ENCODE measurements at regions of chr19 and their contacts with region 1.

Region 1: DNA sequence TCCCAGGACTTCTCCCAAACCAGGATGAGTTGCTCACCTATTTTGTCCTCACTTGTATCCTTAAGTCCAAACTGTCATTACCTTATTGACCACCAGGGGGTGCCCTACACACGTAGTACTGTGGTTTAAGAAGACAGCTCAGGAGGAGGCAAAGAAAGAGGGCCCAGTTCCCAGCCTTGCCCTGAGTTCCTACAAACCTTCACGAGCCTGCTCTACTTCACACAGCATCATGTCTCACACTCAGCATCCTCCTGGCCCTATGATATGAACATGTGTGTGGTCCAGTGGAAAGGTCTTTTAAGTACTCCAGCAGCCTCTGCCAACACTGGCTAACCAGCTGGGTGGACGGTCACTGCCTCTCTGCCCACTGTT is 8.1 kb upstream of the ZNF784 start:
- DNase-seq: peak; percentile 85 to 95 (median 88)
- H3K4me3 ChIP-seq: no peak overlapping the region
- H3K4me3 Mint-ChIP-seq: peak overlapping the region; percentile 4 to 68 (median 52)
- H3K27ac ChIP-seq: no peak overlapping the region
- H3K27ac Mint-ChIP-seq: peak overlapping the region; percentile 69 to 98 (median 91)
- H3K4me1 ChIP-seq: peaks cover 41% of the 10 kb centered on the region
- H3K4me1 Mint-ChIP-seq: peaks cover 30 to 55% (median 43%) of the 10 kb centered on the region in 4 donors
- H3K27me3 ChIP-seq: no peaks in the 10 kb centered on the region
- H3K27me3 Mint-ChIP-seq: no peaks in the 10 kb centered on the region

Region 2: DNA sequence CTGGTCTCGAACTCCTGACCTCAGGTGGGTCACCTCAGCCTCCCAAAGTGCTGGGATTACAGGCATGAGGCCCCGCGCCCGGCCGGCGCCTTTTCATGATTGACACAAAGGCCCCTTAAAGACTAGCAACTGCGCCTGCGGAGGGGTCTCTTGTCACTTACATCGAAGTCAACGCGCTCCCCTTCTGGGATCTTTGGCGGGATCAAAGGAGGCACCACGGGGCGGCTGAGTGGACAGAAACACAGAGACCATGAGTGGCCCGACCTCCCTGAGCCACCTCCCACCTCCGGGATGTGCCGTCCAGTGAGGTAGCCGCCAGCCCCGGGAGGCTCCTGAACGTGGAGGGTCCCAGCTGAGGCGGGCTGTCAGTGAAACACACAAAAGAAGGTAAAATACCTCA is 490.8 kb before region 1 on chr19:
- CTCF ChIA-PET with region 1: interaction called, 7 read pairs
- POLR2A ChIA-PET with region 1: no interaction called
- intact Hi-C with region 1: loop called (anchors 2 kb)
- DNase-seq: no peak
- H3K4me3 ChIP-seq: no peak overlapping the region
- H3K4me3 Mint-ChIP-seq: no peak overlapping the region
- H3K27ac ChIP-seq: no peak overlapping the region
- H3K27ac Mint-ChIP-seq: no peak overlapping the region
- H3K4me1 ChIP-seq: peaks cover 3% of the 10 kb centered on the region
- H3K4me1 Mint-ChIP-seq: peaks cover 3 to 6% (median 4%) of the 10 kb centered on the region in 4 donors
- H3K27me3 ChIP-seq: peaks cover 18% of the 10 kb centered on the region
- H3K27me3 Mint-ChIP-seq: peaks cover 34% of the 10 kb centered on the region in 2 donors

Region 3: DNA sequence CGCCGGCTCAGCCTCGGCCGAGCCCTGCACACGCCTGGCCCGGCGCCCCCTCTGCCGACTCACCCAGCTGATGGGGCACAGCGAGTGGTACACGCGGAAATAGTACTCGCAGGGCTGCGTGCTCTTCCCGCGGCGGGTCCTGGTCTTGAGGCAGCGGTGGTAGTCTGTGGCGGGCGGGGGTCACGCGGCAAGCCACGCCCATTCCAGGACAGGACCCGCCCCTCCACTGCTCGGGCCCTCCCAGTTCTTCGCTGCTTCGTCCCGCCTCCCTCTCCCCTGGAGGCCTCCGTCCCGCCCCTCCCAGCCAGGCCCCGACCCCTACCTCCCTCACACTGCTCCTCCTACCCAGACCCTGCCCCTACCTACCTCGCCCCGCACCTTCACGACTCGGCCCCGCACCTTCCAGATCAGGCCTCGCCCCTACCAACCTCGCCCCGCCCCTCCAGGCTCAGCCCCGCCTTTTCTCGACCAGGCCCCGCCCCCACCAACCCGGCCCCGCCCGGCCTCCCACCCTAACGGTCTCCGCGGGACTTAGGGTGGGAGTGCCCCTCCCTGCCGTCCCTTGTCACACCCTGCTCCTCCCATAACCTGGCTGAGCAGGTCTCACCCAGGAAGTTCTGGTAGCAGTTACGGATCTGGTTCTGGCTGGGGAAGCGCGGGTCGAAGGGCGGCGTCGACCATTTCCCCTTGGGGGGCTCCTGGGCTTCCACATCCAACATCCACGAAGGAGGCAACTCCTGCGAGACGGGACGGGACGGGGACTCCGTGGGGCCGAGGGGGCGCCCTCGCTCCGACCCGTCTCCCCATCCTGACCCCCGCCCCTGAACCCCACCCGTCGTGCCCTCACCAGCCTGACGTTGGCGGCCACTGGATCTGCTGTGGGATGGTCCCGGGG is 278.4 kb before region 1 on chr19:
- CTCF ChIA-PET with region 1: no interaction called
- POLR2A ChIA-PET with region 1: no interaction called
- intact Hi-C with region 1: no loop called
- DNase-seq: peak; percentile 54 to 74 (median 70)
- H3K4me3 ChIP-seq: peak overlapping the region in 1 of 2 donors; percentile 52
- H3K4me3 Mint-ChIP-seq: peak overlapping the region; percentile 69 to 84 (median 80)
- H3K27ac ChIP-seq: no peak overlapping the region
- H3K27ac Mint-ChIP-seq: peak overlapping the region in 5 of 7 donors; percentile 48 to 84 (median 57)
- H3K4me1 ChIP-seq: peaks cover 18% of the 10 kb centered on the region
- H3K4me1 Mint-ChIP-seq: peaks cover 4 to 33% (median 8%) of the 10 kb centered on the region in 4 donors
- H3K27me3 ChIP-seq: peaks cover 29% of the 10 kb centered on the region
- H3K27me3 Mint-ChIP-seq: peaks cover 30 to 47% of the 10 kb centered on the region in 2 donors

Region 4: DNA sequence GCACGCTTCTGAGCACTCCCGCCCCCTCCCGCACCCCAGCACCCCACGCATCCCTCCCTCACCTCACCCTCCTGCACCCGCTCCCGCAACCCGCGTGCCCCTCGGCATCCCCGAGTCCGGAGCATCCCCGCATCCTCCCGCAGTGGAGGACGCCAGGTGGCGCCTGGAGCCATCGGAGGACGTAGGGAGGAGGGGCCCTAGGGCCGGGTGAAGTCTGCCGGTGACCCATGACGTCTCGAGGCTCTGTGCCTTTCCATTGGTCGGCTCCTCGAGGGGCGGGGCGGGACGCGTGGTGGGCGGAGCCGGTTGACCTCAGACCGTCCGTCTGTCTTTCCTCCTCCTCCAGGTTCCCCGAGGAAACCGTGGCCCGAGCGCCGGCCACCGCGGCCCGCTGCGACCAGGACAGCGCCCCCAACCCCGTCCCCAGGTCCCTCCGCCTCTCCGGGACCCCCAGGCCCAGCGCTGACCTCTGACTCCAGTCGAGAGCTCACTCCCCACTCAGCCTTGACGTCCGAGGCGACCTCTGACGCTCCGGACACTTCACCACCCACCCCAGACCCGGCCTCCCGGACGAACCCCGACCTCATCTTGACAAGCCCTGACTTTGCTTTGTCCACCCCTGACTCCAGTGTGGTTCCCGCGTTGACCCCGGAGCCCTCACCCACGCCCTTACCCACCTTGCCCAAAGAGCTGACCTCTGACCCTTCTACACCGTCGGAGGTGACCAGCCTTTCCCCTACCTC is 115.4 kb before region 1 on chr19:
- CTCF ChIA-PET with region 1: interaction called, 165 read pairs
- POLR2A ChIA-PET with region 1: interaction called, 5 read pairs
- intact Hi-C with region 1: loop called (anchors 1 kb)
- DNase-seq: peak; percentile 85 to 86 (median 86)
- H3K4me3 ChIP-seq: peak overlapping the region in 1 of 2 donors; percentile 38
- H3K4me3 Mint-ChIP-seq: peak overlapping the region; percentile 71 to 86 (median 82)
- H3K27ac ChIP-seq: peak overlapping the region; percentile 42
- H3K27ac Mint-ChIP-seq: peak overlapping the region; percentile 77 to 97 (median 92)
- H3K4me1 ChIP-seq: peaks cover 6% of the 10 kb centered on the region
- H3K4me1 Mint-ChIP-seq: peaks cover 3 to 4% (median 3%) of the 10 kb centered on the region in 4 donors
- H3K27me3 ChIP-seq: no peaks in the 10 kb centered on the region
- H3K27me3 Mint-ChIP-seq: peaks cover 1 to 11% of the 10 kb centered on the region in 2 donors

Region 5: DNA sequence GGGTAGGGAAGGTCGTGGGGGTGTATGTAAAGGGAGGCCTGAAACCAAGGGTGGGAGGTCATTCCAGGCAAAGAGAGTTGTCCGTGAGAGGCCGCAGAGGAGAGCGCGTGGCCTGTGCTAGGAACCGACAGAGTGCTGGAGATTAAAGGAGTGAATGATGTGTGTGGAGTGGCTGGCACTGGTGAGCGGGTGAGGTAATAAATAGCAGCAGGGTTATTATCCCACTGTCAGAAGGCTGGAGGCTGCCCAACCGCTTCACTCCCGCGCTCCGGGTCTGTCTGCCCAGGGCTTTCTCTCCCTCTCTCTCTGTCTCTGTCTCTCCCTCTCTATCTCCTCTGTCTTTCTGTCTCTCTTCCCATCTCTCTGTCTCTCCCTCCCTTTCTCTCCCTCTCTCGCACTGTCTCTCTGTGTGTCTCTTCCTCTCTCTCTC is 69.2 kb before region 1 on chr19:
- CTCF ChIA-PET with region 1: no interaction called
- POLR2A ChIA-PET with region 1: no interaction called
- intact Hi-C with region 1: no loop called
- DNase-seq: no peak
- H3K4me3 ChIP-seq: no peak overlapping the region
- H3K4me3 Mint-ChIP-seq: peak overlapping the region in 1 of 8 donors; percentile 27
- H3K27ac ChIP-seq: no peak overlapping the region
- H3K27ac Mint-ChIP-seq: no peak overlapping the region
- H3K4me1 ChIP-seq: no peaks in the 10 kb centered on the region
- H3K4me1 Mint-ChIP-seq: peaks cover 0 to 1% (median 0%) of the 10 kb centered on the region in 4 donors
- H3K27me3 ChIP-seq: no peaks in the 10 kb centered on the region
- H3K27me3 Mint-ChIP-seq: peaks cover 11 to 12% of the 10 kb centered on the region in 2 donors

Region 6: GRCh38 chr19:55586976-55587668 is 45.3 kb before region 1 on chr19:
- CTCF ChIA-PET with region 1: interaction called, 23 read pairs
- POLR2A ChIA-PET with region 1: interaction called, 4 read pairs
- intact Hi-C with region 1: no loop called
- DNase-seq: peak; percentile 88 to 96 (median 91)
- H3K4me3 ChIP-seq: peak overlapping the region in 1 of 2 donors; percentile 60
- H3K4me3 Mint-ChIP-seq: peak overlapping the region; percentile 84 to 94 (median 87)
- H3K27ac ChIP-seq: no peak overlapping the region
- H3K27ac Mint-ChIP-seq: peak overlapping the region; percentile 85 to 93 (median 88)
- H3K4me1 ChIP-seq: peaks cover 29% of the 10 kb centered on the region
- H3K4me1 Mint-ChIP-seq: peaks cover 12 to 46% (median 28%) of the 10 kb centered on the region in 4 donors
- H3K27me3 ChIP-seq: no peaks in the 10 kb centered on the region
- H3K27me3 Mint-ChIP-seq: no peaks in the 10 kb centered on the region

Region 7: GRCh38 chr19:55605207-55605636 is 27.2 kb before region 1 on chr19:
- CTCF ChIA-PET with region 1: interaction called, 94 read pairs
- POLR2A ChIA-PET with region 1: interaction called, 67 read pairs
- intact Hi-C with region 1: no loop called
- DNase-seq: peak; percentile 95 to 98 (median 97)
- H3K4me3 ChIP-seq: peak overlapping the region; percentile 43 to 83
- H3K4me3 Mint-ChIP-seq: peak overlapping the region; percentile 79 to 93 (median 84)
- H3K27ac ChIP-seq: peak overlapping the region; percentile 88
- H3K27ac Mint-ChIP-seq: peak overlapping the region; percentile 83 to 97 (median 94)
- H3K4me1 ChIP-seq: peaks cover 42% of the 10 kb centered on the region
- H3K4me1 Mint-ChIP-seq: peaks cover 41 to 73% (median 48%) of the 10 kb centered on the region in 4 donors
- H3K27me3 ChIP-seq: no peaks in the 10 kb centered on the region
- H3K27me3 Mint-ChIP-seq: no peaks in the 10 kb centered on the region

Region 8: DNA sequence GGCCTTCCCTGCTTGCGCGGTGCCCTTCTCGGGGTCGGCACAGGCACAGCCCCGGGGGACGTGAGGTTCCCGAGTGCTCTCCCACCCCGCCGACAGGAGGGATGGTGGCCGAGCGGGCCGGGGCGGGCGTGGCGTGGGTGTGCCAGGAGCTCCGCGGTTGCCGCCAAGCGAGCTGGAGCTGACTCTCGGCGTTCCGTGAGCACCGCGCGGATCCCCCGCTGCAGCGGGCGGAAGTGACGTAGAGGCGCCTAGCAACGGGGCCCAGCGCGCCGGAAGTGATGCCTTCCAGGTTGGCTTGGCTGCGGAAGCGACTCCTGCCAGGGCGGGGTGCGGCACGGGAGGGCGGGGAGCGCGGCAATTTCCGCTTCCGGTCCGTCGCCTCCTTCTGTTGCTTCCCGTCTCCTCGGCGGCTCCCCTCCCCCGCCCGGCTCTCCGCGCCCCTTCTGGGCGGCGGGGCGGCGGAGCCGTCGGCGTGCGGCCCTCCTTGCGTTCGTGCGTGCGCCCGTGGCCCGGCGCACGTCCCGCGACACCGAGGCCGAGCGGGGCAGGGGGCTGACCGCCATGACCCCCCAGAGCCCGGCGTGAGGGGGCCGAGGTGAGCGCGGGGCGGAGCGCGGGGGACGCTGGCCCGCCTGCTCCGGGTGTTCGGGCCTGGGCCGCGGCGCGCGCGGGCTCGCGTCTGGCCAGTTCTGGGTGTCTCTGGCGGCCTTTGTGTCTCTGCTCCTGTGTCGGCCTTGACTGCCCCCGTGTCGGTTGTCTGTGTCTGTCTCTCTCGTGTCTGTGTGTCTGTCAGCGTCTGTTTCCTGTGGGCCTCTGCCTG is 42.6 kb after region 1 on chr19 and contains the start of gene EPN1:
- CTCF ChIA-PET with region 1: interaction called, 10 read pairs
- POLR2A ChIA-PET with region 1: interaction called, 4 read pairs
- intact Hi-C with region 1: loop called (anchors 1 kb)
- DNase-seq: peak; percentile 94 to 98 (median 97)
- H3K4me3 ChIP-seq: peak within 1 kb of the TSS; percentile 79 to 98
- H3K4me3 Mint-ChIP-seq: peak within 1 kb of the TSS; percentile 94 to 100 (median 97)
- H3K27ac ChIP-seq: peak within 1 kb of the TSS; percentile 94
- H3K27ac Mint-ChIP-seq: peak within 1 kb of the TSS; percentile 94 to 100 (median 99)
- H3K4me1 ChIP-seq: peaks cover 63% of the 10 kb centered on the region
- H3K4me1 Mint-ChIP-seq: peaks cover 32 to 74% (median 55%) of the 10 kb centered on the region in 4 donors
- H3K27me3 ChIP-seq: no peaks in the 10 kb centered on the region
- H3K27me3 Mint-ChIP-seq: no peaks in the 10 kb centered on the region
- total RNA-seq, gene EPN1: 53.9 to 56.9 TPM

Region 9: GRCh38 chr19:55738302-55738701 is 105.9 kb after region 1 on chr19 and contains the start of gene NLRP9:
- CTCF ChIA-PET with region 1: no interaction called
- POLR2A ChIA-PET with region 1: no interaction called
- intact Hi-C with region 1: no loop called
- DNase-seq: no peak
- H3K4me3 ChIP-seq: no peak within 1 kb of the TSS
- H3K4me3 Mint-ChIP-seq: no peak within 1 kb of the TSS
- H3K27ac ChIP-seq: no peak within 1 kb of the TSS
- H3K27ac Mint-ChIP-seq: no peak within 1 kb of the TSS
- H3K4me1 ChIP-seq: no peaks in the 10 kb centered on the region
- H3K4me1 Mint-ChIP-seq: no peaks in the 10 kb centered on the region
- H3K27me3 ChIP-seq: no peaks in the 10 kb centered on the region
- H3K27me3 Mint-ChIP-seq: peaks cover 5 to 10% of the 10 kb centered on the region in 2 donors
- total RNA-seq, gene NLRP9: not detected

Region 10: GRCh38 chr19:56066152-56067023 is 433.9 kb after region 1 on chr19:
- CTCF ChIA-PET with region 1: interaction called, 3 read pairs
- POLR2A ChIA-PET with region 1: no interaction called
- intact Hi-C with region 1: loop called (anchors 5 kb)
- DNase-seq: peak; percentile 50 to 61 (median 54)
- H3K4me3 ChIP-seq: peak overlapping the region in 1 of 2 donors; percentile 30
- H3K4me3 Mint-ChIP-seq: peak overlapping the region; percentile 64 to 77 (median 73)
- H3K27ac ChIP-seq: no peak overlapping the region
- H3K27ac Mint-ChIP-seq: peak overlapping the region in 4 of 7 donors; percentile 10 to 73 (median 24)
- H3K4me1 ChIP-seq: peaks cover 11% of the 10 kb centered on the region
- H3K4me1 Mint-ChIP-seq: peaks cover 3 to 13% (median 9%) of the 10 kb centered on the region in 4 donors
- H3K27me3 ChIP-seq: no peaks in the 10 kb centered on the region
- H3K27me3 Mint-ChIP-seq: peaks cover 22 to 31% of the 10 kb centered on the region in 2 donors

Measured in CD4-positive, alpha-beta memory T cell (primary cell).